ENCODE measurements at regions of chr1 and their contacts with region 1.

Region 1: GRCh38 chr1:93304716-93305138 is 41.0 kb upstream of the DR1 start:
- DNase-seq: peak; percentile 36
- CTCF ChIP-seq: peak; percentile 66

Region 2: DNA sequence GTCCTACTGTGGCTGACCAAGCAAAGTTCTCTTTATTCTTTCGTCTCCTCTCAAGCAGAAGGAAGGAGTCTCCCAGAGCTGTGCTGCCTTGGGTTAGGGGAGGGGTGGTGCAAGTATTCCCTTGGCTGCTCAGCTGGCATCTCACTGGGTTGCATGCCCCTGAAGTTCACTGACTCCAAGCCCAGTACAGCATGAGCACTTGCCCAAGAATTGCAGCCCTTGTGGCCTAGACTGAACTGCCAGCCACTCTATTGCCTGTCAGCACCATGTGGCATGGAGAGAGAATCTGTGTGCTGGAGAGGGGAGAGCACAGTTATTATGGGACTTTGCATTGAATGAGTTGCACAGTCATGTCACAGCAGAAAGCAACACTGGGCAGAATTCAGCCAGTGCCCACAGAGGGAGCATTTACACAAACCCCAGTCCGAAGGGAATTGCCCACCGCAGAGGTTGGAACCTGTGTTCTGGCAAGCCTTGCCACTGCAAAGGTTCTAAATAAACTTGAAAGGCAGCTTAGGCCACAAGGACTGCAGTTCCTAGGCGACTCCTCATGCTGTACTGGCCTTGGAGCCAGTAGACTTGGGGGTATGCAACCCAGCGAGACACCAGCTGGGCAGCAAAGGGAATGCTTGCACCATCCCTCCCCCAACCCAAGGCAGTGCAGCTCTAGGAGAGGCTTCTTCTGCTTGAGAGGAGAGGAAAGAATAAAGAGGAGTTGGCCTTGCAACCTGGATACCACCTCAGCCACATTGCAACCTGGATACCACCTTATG is 69.8 kb after region 1 on chr1:
- in situ Hi-C with region 1: no loop called
- DNase-seq: no peak
- CTCF ChIP-seq: no peak

Region 3: DNA sequence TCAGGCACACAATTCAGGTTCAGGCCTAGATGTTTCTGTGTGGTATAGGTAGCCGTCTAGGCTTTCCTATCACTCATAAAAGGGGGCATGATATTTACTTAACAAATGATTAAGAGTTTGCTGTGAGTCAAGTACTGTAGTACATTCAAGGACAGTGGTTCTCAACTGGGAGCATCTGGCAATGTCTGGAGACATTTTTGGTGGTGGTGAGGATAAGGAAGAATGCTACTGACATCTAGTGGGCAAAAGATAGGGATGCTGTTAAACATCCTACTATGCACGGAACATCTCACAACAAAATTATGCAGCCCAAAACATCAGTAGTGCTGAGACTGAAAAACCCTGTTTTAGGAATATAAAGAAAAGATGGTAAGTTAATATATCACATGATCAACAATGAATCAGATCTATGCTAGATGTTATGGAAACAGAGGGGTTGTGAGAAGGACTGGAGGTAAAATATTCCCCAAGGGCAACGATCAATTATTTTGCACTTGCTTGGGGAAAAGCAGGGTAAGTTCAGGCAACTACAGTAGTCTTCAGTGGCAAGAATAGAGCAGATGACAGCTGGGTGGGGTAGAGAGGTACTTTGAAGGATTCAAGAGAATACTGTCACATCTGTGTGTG is 569.4 kb after region 1 on chr1:
- in situ Hi-C with region 1: loop called (anchors 25 kb)
- DNase-seq: no peak
- CTCF ChIP-seq: peak; percentile 56